Mammary epithelial cell (primary cell): ENCODE measurements at regions of chr4 and their contacts with region 1.

Region 1: GRCh38 chr4:131091896-131092295 is 1995.9 kb downstream of the C4orf33 start:
- DNase-seq: peak; percentile 21
- H3K4me3 ChIP-seq: no peak overlapping the region
- H3K27ac ChIP-seq: no peak overlapping the region
- H3K4me1 ChIP-seq: no peaks in the 10 kb centered on the region
- H3K27me3 ChIP-seq: no peaks in the 10 kb centered on the region
- CTCF ChIP-seq: peak; percentile 38 to 61

Region 2: DNA sequence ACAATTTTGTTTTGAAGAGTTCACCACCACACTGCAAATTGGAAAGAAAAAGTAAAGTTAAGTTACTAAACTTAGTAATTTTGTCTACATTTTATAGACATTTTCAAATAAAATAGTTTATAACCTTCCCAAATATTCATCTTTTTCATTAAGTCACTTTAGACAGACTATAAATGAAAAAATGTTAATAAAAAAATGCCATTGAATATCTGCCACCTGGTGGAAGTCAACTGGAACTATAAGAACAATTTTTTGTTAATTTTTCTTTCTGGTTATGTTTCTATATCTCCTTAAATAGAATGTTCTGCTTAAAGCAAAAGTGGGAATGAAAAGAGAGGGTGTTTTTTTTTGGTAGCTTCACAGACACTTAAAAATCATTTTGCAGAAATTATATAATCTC is 1522.8 kb after region 1 on chr4:
- CTCF ChIA-PET with region 1: no interaction called
- dilution Hi-C with region 1: no loop called
- in situ Hi-C with region 1: no loop called
- intact Hi-C with region 1: loop called (anchors 5 kb)
- DNase-seq: no peak
- H3K4me3 ChIP-seq: no peak overlapping the region
- H3K27ac ChIP-seq: no peak overlapping the region
- H3K4me1 ChIP-seq: no peaks in the 10 kb centered on the region
- H3K27me3 ChIP-seq: no peaks in the 10 kb centered on the region
- CTCF ChIP-seq: peak; percentile 40 to 46

Region 3: GRCh38 chr4:132642016-132642817 is 1550.3 kb after region 1 on chr4:
- CTCF ChIA-PET with region 1: no interaction called
- dilution Hi-C with region 1: no loop called
- in situ Hi-C with region 1: loop called in 1 of 2 experiments (anchors 25 kb)
- intact Hi-C with region 1: loop called (anchors 10 kb)
- DNase-seq: peak; percentile 17
- H3K4me3 ChIP-seq: no peak overlapping the region
- H3K27ac ChIP-seq: no peak overlapping the region
- H3K4me1 ChIP-seq: no peaks in the 10 kb centered on the region
- H3K27me3 ChIP-seq: peaks cover 3% of the 10 kb centered on the region
- CTCF ChIP-seq: peak; percentile 84 to 90